ENCODE measurements at regions of chr14 and their contacts with region 1.

Region 1: DNA sequence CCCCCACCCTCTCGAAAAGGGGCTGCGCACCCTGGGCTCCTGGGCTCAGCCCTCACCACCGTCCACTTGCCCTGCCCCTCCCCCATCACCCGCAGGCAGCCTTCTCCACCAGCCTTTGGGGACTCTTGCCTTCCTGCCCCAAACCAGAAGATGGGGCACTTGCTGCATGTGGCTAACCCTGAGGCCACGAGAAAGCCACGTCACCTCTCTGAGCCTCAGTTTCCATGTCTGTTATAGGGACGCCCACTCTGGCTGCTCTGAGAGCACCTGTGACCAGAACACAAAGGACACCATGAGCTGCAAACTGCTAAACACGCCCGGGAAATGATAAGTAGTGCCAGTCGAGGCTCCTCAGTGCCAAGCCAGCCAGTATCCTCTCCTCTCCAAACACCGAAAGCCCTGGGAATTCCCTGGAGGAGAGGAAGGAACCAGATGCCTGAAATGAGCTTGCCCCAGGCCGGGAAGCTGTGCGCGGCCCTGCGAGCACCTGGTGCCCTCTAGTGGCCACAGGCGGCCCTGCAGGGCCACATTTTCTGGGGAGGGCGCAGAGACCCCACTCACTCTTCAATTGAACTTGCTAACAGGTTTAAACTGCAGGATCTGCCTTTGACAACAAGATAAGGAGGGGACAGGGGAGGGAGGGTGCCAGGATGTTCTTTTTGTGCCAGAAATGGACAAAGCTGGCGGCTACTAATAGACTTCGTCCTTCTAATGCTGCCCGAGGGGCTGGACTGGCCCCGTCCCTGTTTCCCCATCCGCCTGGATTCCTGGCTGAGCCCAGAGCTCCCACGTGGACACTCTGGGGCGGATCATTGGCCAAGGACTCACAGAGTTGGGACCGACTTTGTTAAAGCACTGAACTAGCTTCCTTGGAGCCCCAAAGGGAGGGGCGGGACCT is 10.2 kb upstream of the SERPINA9 start:
- DNase-seq: peak; percentile 70
- H3K4me3 ChIP-seq: peak overlapping the region in 2 of 3 experiments; percentile 17 to 31
- H3K27ac ChIP-seq: no peak overlapping the region
- H3K4me1 ChIP-seq: peaks cover 23% of the 10 kb centered on the region
- H3K27me3 ChIP-seq: no peaks in the 10 kb centered on the region
- CTCF ChIP-seq: peak; percentile 98 to 100

Region 2: GRCh38 chr14:94129111-94129757 is 357.0 kb before region 1 on chr14 and contains the start of gene IFI27L2:
- CTCF ChIA-PET with region 1: interaction called, 9 read pairs
- dilution Hi-C with region 1: no loop called
- in situ Hi-C with region 1: no loop called
- intact Hi-C with region 1: loop called (anchors 1 kb)
- DNase-seq: peak; percentile 87
- H3K4me3 ChIP-seq: peak within 1 kb of the TSS; percentile 52 to 62 (median 57)
- H3K27ac ChIP-seq: no peak within 1 kb of the TSS
- H3K4me1 ChIP-seq: peaks cover 7% of the 10 kb centered on the region
- H3K27me3 ChIP-seq: no peaks in the 10 kb centered on the region
- CTCF ChIP-seq: peak in 1 of 2 donors; percentile 43
- total RNA-seq, gene IFI27L2: 68.0 to 122 TPM

Region 3: GRCh38 chr14:94355191-94355797 is 130.9 kb before region 1 on chr14:
- CTCF ChIA-PET with region 1: no interaction called
- dilution Hi-C with region 1: no loop called
- in situ Hi-C with region 1: no loop called
- intact Hi-C with region 1: loop called (anchors 1 kb)
- DNase-seq: peak; percentile 66
- H3K4me3 ChIP-seq: no peak overlapping the region
- H3K27ac ChIP-seq: no peak overlapping the region
- H3K4me1 ChIP-seq: peaks cover 12% of the 10 kb centered on the region
- H3K27me3 ChIP-seq: no peaks in the 10 kb centered on the region
- CTCF ChIP-seq: peak; percentile 47 to 79

Region 4: DNA sequence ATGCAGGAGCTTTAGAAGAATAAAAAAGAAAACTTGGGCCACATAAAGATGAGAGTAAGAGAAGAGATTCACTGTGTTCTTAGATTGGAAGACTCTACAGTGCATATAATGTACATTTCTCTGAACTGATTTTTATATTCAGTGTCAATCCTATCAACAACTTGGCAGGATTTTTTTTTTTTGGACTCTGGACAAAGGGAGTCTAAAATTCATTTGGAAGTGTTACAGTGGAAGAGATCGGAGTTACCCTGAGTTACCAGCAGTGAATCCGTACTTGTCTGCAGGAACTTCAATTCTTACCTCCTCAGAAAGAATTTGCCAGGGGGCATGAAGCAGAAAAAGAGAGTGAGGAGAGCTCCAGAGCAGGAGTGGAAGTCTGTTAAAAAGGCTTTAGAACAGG is 57.6 kb before region 1 on chr14:
- CTCF ChIA-PET with region 1: interaction called, 41 read pairs
- dilution Hi-C with region 1: no loop called
- in situ Hi-C with region 1: loop called (anchors 10 kb)
- intact Hi-C with region 1: loop called (anchors 1 kb)
- DNase-seq: no peak
- H3K4me3 ChIP-seq: no peak overlapping the region
- H3K27ac ChIP-seq: no peak overlapping the region
- H3K4me1 ChIP-seq: peaks cover 15% of the 10 kb centered on the region
- H3K27me3 ChIP-seq: no peaks in the 10 kb centered on the region
- CTCF ChIP-seq: no peak

Region 5: GRCh38 chr14:94548999-94549985 is 63.1 kb after region 1 on chr14:
- CTCF ChIA-PET with region 1: no interaction called
- dilution Hi-C with region 1: no loop called
- in situ Hi-C with region 1: no loop called
- intact Hi-C with region 1: loop called (anchors 1 kb)
- DNase-seq: peak; percentile 21
- H3K4me3 ChIP-seq: no peak overlapping the region
- H3K27ac ChIP-seq: no peak overlapping the region
- H3K4me1 ChIP-seq: no peaks in the 10 kb centered on the region
- H3K27me3 ChIP-seq: no peaks in the 10 kb centered on the region
- CTCF ChIP-seq: peak; percentile 81 to 84

Measured in mammary epithelial cell (primary cell).